Activated CD4-positive, alpha-beta memory T cell treated with anti-CD3 and anti-CD28 coated beads, Interleukin-2, amount 10 ng/mL, durations not matched to agents 7 days and 5 days (primary cell): ENCODE measurements at regions of chr10 and their contacts with region 1.

Region 1: GRCh38 chr10:109978481-109978880 is 29.3 kb upstream of the ADD3 start:
- DNase-seq: peak; percentile 70
- H3K4me3 Mint-ChIP-seq: no peak overlapping the region
- H3K27ac Mint-ChIP-seq: no peak overlapping the region
- H3K4me1 Mint-ChIP-seq: peaks cover 6% of the 10 kb centered on the region
- H3K27me3 Mint-ChIP-seq: no peaks in the 10 kb centered on the region

Region 2: GRCh38 chr10:109998513-109998912 is 20.0 kb after region 1 on chr10:
- CTCF ChIA-PET with region 1: interaction called, 11 read pairs
- POLR2A ChIA-PET with region 1: no interaction called
- DNase-seq: no peak
- H3K4me3 Mint-ChIP-seq: no peak overlapping the region
- H3K27ac Mint-ChIP-seq: no peak overlapping the region
- H3K4me1 Mint-ChIP-seq: peaks cover 3% of the 10 kb centered on the region
- H3K27me3 Mint-ChIP-seq: peaks cover 5% of the 10 kb centered on the region